Right ventricle myocardium inferior (tissue), 1 donor: ENCODE measurements at regions of chr7 and their contacts with region 1.

Region 1: DNA sequence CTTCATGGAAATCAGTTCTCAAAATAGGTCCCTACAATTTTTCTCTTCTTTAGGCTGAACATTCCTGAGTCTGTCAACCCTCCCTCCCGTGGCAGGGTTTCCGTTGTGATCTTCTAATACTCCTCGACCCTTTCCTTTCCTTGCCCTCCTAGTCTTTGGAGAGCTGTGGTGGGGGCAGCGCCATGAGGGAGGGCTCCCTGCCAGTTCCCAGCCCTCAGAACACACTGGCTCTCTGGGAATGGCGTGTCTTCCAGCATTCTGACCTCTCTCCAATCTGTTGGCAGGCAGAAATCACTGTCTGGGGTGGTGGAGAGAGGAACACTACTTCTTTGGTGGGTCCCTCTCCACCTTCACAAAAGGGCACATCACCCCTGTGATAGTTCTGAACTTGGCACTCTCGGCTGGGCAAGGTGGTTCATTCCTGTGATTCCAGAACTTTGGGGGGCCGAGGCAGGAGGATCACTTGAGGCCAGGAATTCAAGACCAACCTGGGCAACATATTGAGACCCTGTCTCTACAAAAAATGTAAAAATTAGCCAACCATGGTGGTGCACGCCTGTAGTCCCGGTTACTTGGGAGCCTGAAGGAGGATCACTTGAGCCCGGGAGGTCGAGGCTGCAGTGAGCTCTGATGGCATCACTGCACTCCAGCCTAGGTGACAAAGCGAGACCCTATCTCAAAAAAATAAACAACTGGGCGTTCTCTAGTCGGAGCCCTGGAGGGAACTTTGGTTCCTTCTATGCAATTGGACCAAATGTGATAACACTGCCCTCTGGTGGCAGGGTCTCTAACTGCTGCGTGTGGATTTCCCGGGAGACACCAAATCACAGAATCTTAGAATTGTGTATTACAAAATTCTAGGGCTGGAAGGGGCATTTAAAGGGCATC is 13.1 kb upstream of the ARPC1A start:
- DNase-seq: no peak
- ATAC-seq: peak; percentile 60

Region 2: GRCh38 chr7:99040104-99040958 is 272.2 kb before region 1 on chr7:
- intact Hi-C with region 1: loop called (anchors 1 kb)
- DNase-seq: peak; percentile 81
- ATAC-seq: peak; percentile 85

Region 3: DNA sequence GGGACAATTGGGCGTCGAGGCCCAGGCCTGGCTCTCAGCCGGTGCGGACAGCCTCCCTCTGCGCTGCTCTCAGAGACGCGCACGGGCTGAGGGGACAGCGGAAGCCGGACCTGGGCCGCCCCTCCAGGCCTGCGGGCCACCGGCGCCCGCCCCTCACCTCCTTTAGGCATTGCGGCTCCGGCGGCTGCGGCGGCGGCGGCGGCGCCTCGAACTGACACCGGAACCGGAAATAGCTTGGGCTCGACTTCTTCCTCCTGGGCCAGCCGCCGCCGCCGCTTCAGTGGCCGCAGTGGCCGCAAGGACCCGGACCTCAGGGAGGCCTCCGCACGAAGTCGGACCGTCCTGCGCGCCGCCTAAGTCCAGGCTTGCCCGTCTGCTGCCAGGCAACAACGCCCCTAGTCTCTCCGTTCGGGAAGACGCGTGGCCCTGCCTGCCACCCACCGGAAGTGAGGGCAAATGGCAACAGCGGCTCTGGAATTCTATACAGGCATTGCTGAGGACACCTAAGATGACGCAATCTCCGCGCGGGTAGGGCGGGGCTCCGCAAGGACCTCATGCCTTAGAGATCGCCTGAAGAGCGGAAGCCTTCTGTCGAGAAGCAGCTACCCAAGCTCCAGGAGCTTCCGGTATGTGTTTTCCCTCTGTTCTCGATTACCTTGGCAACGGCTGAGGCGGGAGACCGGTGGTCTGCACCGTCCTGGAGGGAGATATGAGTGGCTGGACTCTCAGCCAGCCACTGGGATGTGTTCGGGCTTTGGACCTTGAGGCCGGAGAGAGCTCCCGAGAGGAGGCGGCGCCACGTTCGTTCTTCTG is 96.0 kb after region 1 on chr7 and contains the starts of genes BUD31 and PDAP1:
- intact Hi-C with region 1: no loop called
- DNase-seq: peak; percentile 97
- ATAC-seq: peak; percentile 95
- total RNA-seq, gene BUD31: 38.1 TPM
- total RNA-seq, gene PDAP1: 107 TPM